ENCODE measurements at regions of chr1 and their contacts with region 1.

Region 1: DNA sequence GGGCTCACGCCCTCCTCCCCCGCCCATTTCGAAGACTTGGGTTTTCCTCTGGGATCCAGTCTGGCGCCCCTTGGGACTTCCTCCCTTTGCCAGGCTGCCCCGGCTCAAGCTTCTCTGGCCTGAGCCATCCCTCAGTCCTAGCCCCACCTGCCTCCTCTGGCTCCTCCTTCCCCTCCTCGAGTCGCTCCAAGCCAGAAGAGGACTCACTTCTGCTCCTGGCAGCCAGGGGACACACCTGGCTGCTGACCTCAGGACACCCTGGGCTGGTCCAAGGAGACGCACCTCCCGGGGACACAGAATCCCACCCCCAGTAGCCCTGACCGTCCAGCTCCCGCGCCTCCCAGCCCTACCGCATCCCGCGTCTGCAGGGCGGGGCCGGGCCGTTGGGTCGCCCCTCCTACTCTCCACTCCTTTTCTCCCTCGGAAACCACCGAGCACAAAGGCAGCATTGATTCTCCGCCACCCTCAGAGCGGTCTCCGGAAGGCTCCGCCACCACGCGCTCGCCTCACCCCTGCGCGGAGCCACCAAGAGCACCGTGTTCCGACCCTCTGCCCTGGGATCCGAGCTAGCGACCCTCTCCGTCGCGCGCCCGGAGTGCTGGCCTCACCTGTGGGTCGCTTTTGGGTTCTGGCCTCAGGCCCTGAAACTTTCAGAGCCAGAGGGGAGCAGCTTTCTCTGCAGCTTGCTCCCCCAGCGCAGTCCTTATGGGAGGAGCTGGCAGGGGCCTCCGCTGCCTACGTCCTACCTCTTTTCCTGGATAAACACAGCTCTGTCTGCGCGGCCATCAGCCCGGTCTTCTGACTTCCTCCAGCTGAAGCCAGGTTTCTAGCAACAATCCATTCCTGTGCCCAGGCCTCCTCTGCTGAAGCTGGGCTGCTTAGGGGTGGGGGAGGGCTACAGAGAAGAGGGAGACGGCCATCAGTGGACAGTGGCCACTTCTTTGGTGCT is at the start of gene C2CD4D:
- DNase-seq: peak; percentile 86 to 93
- H3K4me3 ChIP-seq: peak within 1 kb of the TSS; percentile 57
- H3K27ac ChIP-seq: peak within 1 kb of the TSS; percentile 86
- H3K4me1 ChIP-seq: peaks cover 35% of the 10 kb centered on the region
- H3K27me3 ChIP-seq: no peaks in the 10 kb centered on the region
- CTCF ChIP-seq: no peak
- total RNA-seq, gene C2CD4D: 1.4 and 1.5 TPM in 2 replicates

Region 2: DNA sequence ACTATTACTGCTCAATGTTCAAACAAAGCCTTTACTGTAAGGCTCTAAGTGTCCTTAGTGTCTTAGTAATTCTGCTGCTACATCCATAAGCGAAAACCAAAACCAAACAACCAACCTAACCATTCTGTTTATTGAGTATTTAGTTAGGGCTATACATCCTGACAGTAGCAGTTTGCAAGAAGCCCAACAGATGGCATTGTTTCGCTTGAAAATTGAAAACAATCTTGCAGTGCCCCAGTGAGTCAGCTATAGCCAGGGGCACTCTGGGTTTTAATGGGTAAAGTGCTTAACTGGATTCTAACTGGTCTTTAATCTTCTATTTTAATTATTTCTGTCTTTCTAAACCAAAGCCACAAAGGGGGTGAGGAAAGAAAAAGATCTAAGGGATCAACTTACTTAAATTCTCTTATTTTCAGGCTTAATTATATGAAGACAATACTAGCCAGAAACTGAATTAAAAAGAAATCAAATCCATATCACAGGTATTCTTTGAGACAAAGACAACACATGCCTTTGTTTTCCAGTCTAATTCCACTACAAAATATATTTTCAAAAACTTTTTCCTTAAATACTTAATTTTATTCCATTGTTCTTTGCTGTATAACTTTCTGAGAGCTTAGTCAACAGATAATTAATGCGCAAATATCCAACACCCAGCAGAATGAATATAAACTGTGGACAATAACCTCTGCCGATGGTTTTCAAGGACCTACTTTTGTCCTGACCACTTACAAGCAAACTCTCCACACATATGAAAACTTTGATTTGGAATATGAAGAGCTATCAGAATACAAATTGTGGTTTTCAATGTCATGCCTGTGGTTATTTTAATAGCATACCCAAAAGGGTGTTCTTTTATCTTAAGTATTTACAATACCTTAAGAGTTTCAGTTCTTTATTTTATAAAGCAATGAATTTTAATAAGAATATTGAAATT is 395.6 kb before region 1 on chr1:
- CTCF ChIA-PET with region 1: no interaction called
- POLR2A ChIA-PET with region 1: no interaction called
- intact Hi-C with region 1: loop called (anchors 1 kb)
- DNase-seq: peak; percentile 62 to 77
- H3K4me3 ChIP-seq: no peak overlapping the region
- H3K27ac ChIP-seq: peak overlapping the region; percentile 62
- H3K4me1 ChIP-seq: peaks cover 11% of the 10 kb centered on the region
- H3K27me3 ChIP-seq: no peaks in the 10 kb centered on the region
- CTCF ChIP-seq: peak; percentile 84

Region 3: DNA sequence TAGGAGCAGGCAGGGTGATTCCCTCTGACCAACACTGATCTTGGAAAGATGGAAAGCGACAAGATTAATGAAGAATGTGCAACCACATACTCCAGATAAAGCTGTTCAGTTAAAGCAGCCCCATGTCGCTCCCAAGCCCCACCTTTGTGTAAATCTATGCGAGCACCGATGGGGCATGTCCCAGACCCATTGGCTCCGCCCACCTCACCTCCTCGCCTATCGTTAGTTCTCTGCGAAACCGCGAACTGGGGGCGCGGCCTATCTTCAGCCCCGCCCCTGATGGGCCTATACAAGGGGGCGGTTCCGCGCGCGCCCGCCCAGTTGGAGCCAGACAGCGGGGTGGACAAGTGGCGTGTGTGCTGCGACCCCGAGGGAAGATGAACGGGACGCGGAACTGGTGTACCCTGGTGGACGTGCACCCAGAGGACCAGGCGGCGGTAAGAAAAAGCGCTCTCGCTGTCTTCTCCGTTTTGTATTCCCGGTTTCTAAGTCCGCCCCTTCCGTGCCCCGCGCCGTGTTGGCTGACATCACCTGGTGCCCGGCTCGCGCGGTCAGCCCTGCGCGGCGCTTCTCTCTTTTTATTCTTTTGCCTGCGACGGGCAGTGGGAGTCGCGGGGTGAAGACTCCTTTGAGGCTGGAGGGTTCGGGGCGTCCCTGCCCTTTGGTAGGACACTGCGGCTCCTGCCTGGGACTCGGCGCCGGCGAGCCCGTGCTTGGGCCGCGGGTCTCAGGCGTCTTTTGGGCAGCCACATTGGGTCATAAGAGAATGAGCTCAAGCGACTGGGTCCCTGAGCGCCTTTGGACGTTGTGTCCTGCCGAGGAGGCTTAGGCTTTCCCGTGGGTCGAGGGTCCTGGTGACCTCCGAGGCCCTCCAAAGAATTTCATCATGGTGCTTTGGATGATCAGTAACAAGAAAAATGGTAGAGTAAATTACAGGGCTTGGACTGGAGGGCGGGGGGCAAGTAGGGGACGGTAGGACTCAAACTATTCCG is 299.4 kb before region 1 on chr1 and contains the start of gene TUFT1:
- CTCF ChIA-PET with region 1: interaction called, 6 read pairs
- POLR2A ChIA-PET with region 1: interaction called, 9 read pairs
- intact Hi-C with region 1: loop called (anchors 2 kb)
- DNase-seq: peak; percentile 85 to 95
- H3K4me3 ChIP-seq: peak within 1 kb of the TSS; percentile 92
- H3K27ac ChIP-seq: peak within 1 kb of the TSS; percentile 95
- H3K4me1 ChIP-seq: peaks cover 60% of the 10 kb centered on the region
- H3K27me3 ChIP-seq: no peaks in the 10 kb centered on the region
- CTCF ChIP-seq: no peak
- total RNA-seq, gene TUFT1: 35.3 and 40.2 TPM in 2 replicates

Region 4: GRCh38 chr1:151739590-151740375 is 99.9 kb before region 1 on chr1:
- CTCF ChIA-PET with region 1: no interaction called
- POLR2A ChIA-PET with region 1: no interaction called
- intact Hi-C with region 1: loop called (anchors 1 kb)
- DNase-seq: peak; percentile 58 to 78
- H3K4me3 ChIP-seq: no peak overlapping the region
- H3K27ac ChIP-seq: no peak overlapping the region
- H3K4me1 ChIP-seq: peaks cover 12% of the 10 kb centered on the region
- H3K27me3 ChIP-seq: no peaks in the 10 kb centered on the region
- CTCF ChIP-seq: no peak; the same call in 1 of the 2 replicates

Region 5: GRCh38 chr1:152001391-152002249 is 161.9 kb after region 1 on chr1:
- CTCF ChIA-PET with region 1: interaction called, 7 read pairs
- POLR2A ChIA-PET with region 1: interaction called, 8 read pairs
- intact Hi-C with region 1: loop called (anchors 1 kb)
- DNase-seq: peak; percentile 87 to 93
- H3K4me3 ChIP-seq: no peak overlapping the region
- H3K27ac ChIP-seq: peak overlapping the region; percentile 90
- H3K4me1 ChIP-seq: peaks cover 57% of the 10 kb centered on the region
- H3K27me3 ChIP-seq: no peaks in the 10 kb centered on the region
- CTCF ChIP-seq: peak; percentile 94

Region 6: GRCh38 chr1:152198982-152199381 is 359.3 kb after region 1 on chr1:
- CTCF ChIA-PET with region 1: no interaction called
- POLR2A ChIA-PET with region 1: no interaction called
- intact Hi-C with region 1: no loop called
- DNase-seq: no peak
- H3K4me3 ChIP-seq: no peak overlapping the region
- H3K27ac ChIP-seq: no peak overlapping the region
- H3K4me1 ChIP-seq: no peaks in the 10 kb centered on the region
- H3K27me3 ChIP-seq: peaks cover 36% of the 10 kb centered on the region
- CTCF ChIP-seq: no peak